GM12878 (cell line): ENCODE measurements at regions of chr17 and their contacts with region 1.

Region 1: DNA sequence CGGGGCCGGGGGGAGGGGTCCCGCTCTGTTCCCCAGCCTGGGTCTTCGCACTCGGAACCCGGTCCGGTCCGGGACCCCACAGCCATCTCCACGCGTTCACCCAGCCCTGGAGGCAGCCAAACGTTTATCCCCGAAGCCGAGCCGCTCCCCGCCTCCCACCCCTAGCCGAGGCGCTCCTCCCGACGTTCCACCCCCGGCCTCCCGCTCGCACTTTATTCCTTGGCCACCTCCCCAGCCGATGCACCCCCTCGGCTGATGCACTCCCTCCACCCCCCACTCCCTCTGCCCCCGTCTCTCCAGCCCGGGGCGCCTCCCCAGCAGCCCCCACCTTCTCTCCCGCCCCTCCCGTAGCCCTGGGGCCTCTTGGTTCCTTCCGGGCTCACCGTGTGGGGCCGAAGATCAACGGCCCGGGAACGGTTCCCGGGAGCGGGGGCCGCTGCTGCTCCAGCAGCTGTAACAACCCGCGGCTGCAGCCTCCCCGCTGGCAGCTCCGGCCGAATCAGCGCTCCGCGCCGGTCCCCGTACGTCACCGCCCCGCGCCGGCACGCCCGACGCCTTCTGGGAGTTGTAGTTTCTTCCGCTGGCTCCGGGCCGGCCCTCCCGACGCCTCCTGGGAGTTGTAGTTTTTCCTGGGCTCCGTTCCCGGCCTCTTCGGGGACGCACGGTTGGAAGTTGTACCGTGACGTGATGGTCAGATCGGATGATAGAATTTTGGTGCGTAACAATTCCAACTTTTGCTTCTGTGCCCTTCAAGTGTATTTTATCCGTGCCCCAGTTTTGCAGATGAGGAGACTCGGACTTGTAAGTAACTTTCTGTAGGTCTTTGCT is at the starts of genes LRRC3C and ORMDL3:
- DNase-seq: no peak
- ATAC-seq: peak; percentile 76
- H3K4me3 ChIP-seq: peak within 1 kb of the TSS; percentile 87
- H3K27ac ChIP-seq: peak within 1 kb of the TSS; percentile 82
- H3K4me1 ChIP-seq: peaks cover 22% of the 10 kb centered on the region
- H3K27me3 ChIP-seq: no peaks in the 10 kb centered on the region
- CTCF ChIP-seq: no peak
- EP300 ChIP-seq: 0 out of 4 replicates have a peak, but pooled peaks of 1 of the 2 experiments have one; percentile 10
- POLR2A ChIP-seq: peak; percentile 84
- RAD21 ChIP-seq: no peak
- polyA plus RNA-seq, gene LRRC3C: not detected
- polyA plus RNA-seq, gene ORMDL3: 8.8 to 21.1 TPM

Region 2: GRCh38 chr17:39281806-39282205 is 645.5 kb before region 1 on chr17:
- CTCF ChIA-PET with region 1: no interaction called
- POLR2A ChIA-PET with region 1: no interaction called
- RAD21 ChIA-PET with region 1: no interaction called
- SMC1A ChIA-PET with region 1: no interaction called
- in situ Hi-C with region 1: no loop called
- intact Hi-C with region 1: no loop called
- DNase-seq: no peak
- ATAC-seq: no peak
- H3K4me3 ChIP-seq: no peak overlapping the region
- H3K27ac ChIP-seq: no peak overlapping the region
- H3K4me1 ChIP-seq: no peaks in the 10 kb centered on the region
- H3K27me3 ChIP-seq: no peaks in the 10 kb centered on the region
- CTCF ChIP-seq: no peak
- EP300 ChIP-seq: no peak
- POLR2A ChIP-seq: no peak
- RAD21 ChIP-seq: no peak

Region 3: DNA sequence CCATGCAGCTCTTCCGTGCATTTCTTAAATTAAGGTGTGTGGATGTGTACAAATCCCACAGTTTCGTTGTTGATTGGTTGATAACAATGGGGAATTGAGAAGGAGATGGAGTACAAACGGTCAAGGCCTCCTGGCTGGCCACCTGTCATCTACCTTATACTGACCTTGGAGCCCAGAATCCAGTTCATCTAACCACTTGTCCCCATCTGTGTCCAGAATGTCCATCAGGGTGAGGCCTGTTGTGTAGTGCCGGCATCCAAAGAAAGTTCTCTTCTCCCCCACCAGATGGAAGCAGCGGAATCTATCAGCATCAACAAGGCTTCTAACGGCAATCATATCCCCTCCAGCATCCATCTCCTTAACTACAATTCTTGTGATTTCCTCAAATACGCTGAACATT is 10.4 kb before region 1 on chr17:
- CTCF ChIA-PET with region 1: interaction called, 5 read pairs
- POLR2A ChIA-PET with region 1: interaction called, 21 read pairs
- RAD21 ChIA-PET with region 1: interaction called, 16 read pairs
- SMC1A ChIA-PET with region 1: interaction called, 12 read pairs
- in situ Hi-C with region 1: no loop called
- intact Hi-C with region 1: no loop called
- DNase-seq: no peak
- ATAC-seq: no peak
- H3K4me3 ChIP-seq: no peak overlapping the region
- H3K27ac ChIP-seq: no peak overlapping the region
- H3K4me1 ChIP-seq: peaks cover 33% of the 10 kb centered on the region
- H3K27me3 ChIP-seq: no peaks in the 10 kb centered on the region
- CTCF ChIP-seq: no peak
- EP300 ChIP-seq: no peak
- POLR2A ChIP-seq: no peak
- RAD21 ChIP-seq: no peak

Region 4: DNA sequence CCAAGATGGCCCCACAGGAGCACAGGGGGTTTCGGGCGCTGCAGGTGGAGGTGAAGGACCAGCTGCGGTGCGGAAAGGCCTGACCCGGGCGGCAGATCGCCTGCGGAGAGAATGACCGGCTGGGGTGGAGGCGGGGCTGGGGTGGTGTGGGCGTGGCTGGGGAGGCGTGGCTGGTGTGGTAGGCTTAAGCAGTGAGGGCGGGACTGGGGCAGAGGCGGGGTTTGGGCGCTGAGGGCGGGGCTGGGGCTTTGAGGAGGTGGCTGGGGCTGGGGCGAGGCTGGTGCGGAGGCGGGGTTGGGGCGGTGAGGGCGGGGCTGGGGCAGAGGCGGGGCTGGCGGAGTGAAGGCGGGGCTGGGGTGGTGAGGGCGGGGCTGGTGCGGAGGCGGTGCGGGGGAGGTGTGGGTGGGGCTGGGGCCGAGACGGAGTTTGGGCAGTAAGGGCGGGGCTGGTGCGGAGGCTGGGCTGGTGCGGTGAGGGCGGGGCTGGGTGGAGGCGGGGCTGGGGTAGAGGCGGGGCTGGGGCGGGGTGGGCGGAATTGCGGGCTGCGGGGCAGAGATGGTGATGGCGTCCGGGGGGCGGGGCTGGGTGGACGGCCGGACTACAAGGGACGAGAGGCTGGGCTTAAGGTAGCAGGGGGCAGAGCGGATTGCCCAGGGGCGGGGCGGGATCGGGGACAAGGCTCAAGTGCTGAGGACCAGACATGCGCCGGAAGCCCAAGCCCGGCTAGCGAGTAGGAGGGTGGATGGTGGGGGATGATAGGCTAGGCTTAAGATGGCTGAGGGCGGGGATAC is 25.6 kb after region 1 on chr17:
- CTCF ChIA-PET with region 1: interaction called, 3 read pairs
- POLR2A ChIA-PET with region 1: interaction called, 12 read pairs
- RAD21 ChIA-PET with region 1: no interaction called
- SMC1A ChIA-PET with region 1: no interaction called
- in situ Hi-C with region 1: no loop called
- intact Hi-C with region 1: loop called (anchors 2 kb)
- DNase-seq: peak; percentile 79
- ATAC-seq: peak; percentile 97
- H3K4me3 ChIP-seq: peak overlapping the region; percentile 76
- H3K27ac ChIP-seq: peak overlapping the region; percentile 40; the same call in 1 of the 2 replicates
- H3K4me1 ChIP-seq: peaks cover 3% of the 10 kb centered on the region; the same call in 1 of the 2 replicates
- H3K27me3 ChIP-seq: no peaks in the 10 kb centered on the region
- CTCF ChIP-seq: no peak
- EP300 ChIP-seq: no peak
- POLR2A ChIP-seq: peak; percentile 81; the same call in 1 of the 2 replicates
- RAD21 ChIP-seq: no peak

Region 5: GRCh38 chr17:39980351-39981206 is 53.3 kb after region 1 on chr17 and contains the start of gene PSMD3:
- CTCF ChIA-PET with region 1: interaction called, 4 read pairs
- POLR2A ChIA-PET with region 1: interaction called, 6 read pairs
- RAD21 ChIA-PET with region 1: interaction called, 8 read pairs
- SMC1A ChIA-PET with region 1: interaction called, 4 read pairs
- in situ Hi-C with region 1: no loop called
- intact Hi-C with region 1: loop called (anchors 5 kb)
- DNase-seq: peak; percentile 100
- ATAC-seq: peak; percentile 94
- H3K4me3 ChIP-seq: peak within 1 kb of the TSS; percentile 90
- H3K27ac ChIP-seq: peak within 1 kb of the TSS; percentile 90
- H3K4me1 ChIP-seq: peaks cover 6% of the 10 kb centered on the region
- H3K27me3 ChIP-seq: no peaks in the 10 kb centered on the region; a peak in 1 of 4 replicates
- CTCF ChIP-seq: peak; percentile 80 to 97 (median 92)
- EP300 ChIP-seq: peak; percentile 21 to 44; a peak in 1 of 4 replicates
- POLR2A ChIP-seq: peak; percentile 93
- RAD21 ChIP-seq: peak; percentile 92
- polyA plus RNA-seq, gene PSMD3: 2.2 to 2.6 TPM